Activated CD8-positive, alpha-beta T cell treated with anti-CD3 and anti-CD28 coated beads for 36 hours (primary cell): ENCODE measurements at regions of chr3 and their contacts with region 1.

Region 1: DNA sequence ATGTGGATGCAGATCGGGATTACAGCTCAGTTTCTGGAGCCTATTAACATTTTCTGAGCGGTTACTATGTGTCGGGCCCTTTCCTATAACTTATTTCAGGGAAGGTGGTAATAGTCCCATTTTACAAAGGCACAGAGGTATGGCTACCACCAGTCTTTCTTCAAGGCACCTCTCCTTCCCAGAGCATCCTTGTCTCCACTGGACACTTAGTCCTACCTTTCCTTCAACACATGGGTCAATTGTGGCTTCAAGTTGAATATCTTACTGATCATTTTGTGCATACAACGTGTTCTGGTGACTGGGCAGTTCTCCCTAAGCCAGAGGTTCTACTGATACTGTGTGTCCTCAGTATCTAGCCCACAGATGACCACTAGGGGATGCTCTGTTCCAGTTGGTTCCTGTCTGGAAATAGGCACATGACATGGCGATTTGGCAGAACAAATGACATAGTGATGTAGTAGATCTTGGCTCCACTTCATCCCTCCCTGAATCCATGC is 60.7 kb upstream of the CMTM8 start:
- DNase-seq: peak; percentile 72
- ATAC-seq: peak; percentile 74
- H3K4me3 Mint-ChIP-seq: no peak overlapping the region
- H3K27ac Mint-ChIP-seq: no peak overlapping the region
- H3K4me1 Mint-ChIP-seq: peaks cover 7% of the 10 kb centered on the region
- H3K27me3 Mint-ChIP-seq: peaks cover 8% of the 10 kb centered on the region
- CTCF ChIP-seq: peak; percentile 56

Region 2: GRCh38 chr3:31968927-31969418 is 208.8 kb before region 1 on chr3:
- CTCF ChIA-PET with region 1: no interaction called
- POLR2A ChIA-PET with region 1: no interaction called
- intact Hi-C with region 1: no loop called
- DNase-seq: no peak
- ATAC-seq: no peak
- H3K4me3 Mint-ChIP-seq: no peak overlapping the region
- H3K27ac Mint-ChIP-seq: no peak overlapping the region
- H3K4me1 Mint-ChIP-seq: no peaks in the 10 kb centered on the region
- H3K27me3 Mint-ChIP-seq: peaks cover 2% of the 10 kb centered on the region
- CTCF ChIP-seq: no peak

Region 3: GRCh38 chr3:32200490-32200889 is 22.7 kb after region 1 on chr3:
- CTCF ChIA-PET with region 1: interaction called, 10 read pairs
- POLR2A ChIA-PET with region 1: no interaction called
- intact Hi-C with region 1: no loop called
- DNase-seq: no peak
- ATAC-seq: no peak
- H3K4me3 Mint-ChIP-seq: no peak overlapping the region
- H3K27ac Mint-ChIP-seq: no peak overlapping the region
- H3K4me1 Mint-ChIP-seq: no peaks in the 10 kb centered on the region
- H3K27me3 Mint-ChIP-seq: peaks cover 4% of the 10 kb centered on the region
- CTCF ChIP-seq: no peak

Region 4: DNA sequence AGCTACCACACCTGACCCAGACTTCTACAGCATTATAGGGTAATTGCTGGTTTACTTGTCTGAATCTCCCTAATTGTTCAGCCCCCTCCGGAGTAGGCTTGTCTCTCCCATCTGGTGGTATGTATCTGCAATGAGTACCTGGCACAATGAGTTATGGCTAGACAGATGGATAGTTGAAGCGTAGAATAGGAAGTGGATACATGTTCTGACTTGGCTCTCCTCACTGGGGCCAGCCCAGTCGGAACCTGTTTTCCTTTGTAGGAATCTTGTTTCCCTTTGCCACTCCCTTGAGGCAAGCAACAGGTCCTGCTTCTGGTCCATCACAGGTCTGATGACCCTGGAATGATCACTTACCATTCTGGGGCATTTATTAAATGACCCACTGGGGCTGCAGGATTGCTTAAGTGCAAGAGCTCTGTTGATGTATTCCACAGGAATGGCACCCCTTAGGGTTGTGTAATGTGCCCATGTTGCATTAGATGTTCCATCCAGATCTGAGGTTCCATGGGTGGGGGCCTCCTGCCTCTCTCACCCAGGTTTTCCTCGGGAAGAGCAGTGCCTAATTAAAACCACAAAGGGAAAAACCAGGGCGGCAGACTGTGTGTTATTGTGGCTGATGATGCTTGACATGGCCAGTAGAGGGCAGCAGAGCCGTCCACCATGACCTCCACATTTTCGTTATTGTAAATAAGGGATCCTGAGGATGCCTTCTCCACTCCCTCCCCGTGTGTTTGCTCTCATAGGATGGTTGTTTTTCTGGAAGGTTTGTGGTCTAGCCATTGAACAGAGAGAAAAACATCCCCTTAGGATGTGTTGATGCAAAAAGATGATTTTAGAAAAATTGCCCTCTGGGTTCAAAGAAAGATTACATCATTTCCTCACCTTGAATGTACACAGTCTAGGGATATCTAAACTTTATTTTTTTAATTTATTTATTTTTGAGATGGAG is 118.8 kb after region 1 on chr3:
- CTCF ChIA-PET with region 1: interaction called, 27 read pairs
- POLR2A ChIA-PET with region 1: no interaction called
- intact Hi-C with region 1: no loop called
- DNase-seq: peak; percentile 72
- ATAC-seq: peak; percentile 81
- H3K4me3 Mint-ChIP-seq: no peak overlapping the region
- H3K27ac Mint-ChIP-seq: peak overlapping the region; percentile 55
- H3K4me1 Mint-ChIP-seq: peaks cover 16% of the 10 kb centered on the region
- H3K27me3 Mint-ChIP-seq: no peaks in the 10 kb centered on the region
- CTCF ChIP-seq: peak; percentile 88

Region 5: GRCh38 chr3:32334675-32335074 is 156.9 kb after region 1 on chr3:
- CTCF ChIA-PET with region 1: interaction called, 14 read pairs
- POLR2A ChIA-PET with region 1: no interaction called
- intact Hi-C with region 1: no loop called
- DNase-seq: peak; percentile 61
- ATAC-seq: peak; percentile 81
- H3K4me3 Mint-ChIP-seq: no peak overlapping the region
- H3K27ac Mint-ChIP-seq: no peak overlapping the region
- H3K4me1 Mint-ChIP-seq: peaks cover 21% of the 10 kb centered on the region
- H3K27me3 Mint-ChIP-seq: no peaks in the 10 kb centered on the region
- CTCF ChIP-seq: peak; percentile 60

Region 6: GRCh38 chr3:32374788-32375595 is 197.2 kb after region 1 on chr3:
- CTCF ChIA-PET with region 1: interaction called, 13 read pairs
- POLR2A ChIA-PET with region 1: no interaction called
- intact Hi-C with region 1: no loop called
- DNase-seq: peak; percentile 83
- ATAC-seq: peak; percentile 68
- H3K4me3 Mint-ChIP-seq: no peak overlapping the region
- H3K27ac Mint-ChIP-seq: no peak overlapping the region
- H3K4me1 Mint-ChIP-seq: peaks cover 24% of the 10 kb centered on the region
- H3K27me3 Mint-ChIP-seq: no peaks in the 10 kb centered on the region
- CTCF ChIP-seq: peak; percentile 76

Region 7: GRCh38 chr3:32667122-32667521 is 489.4 kb after region 1 on chr3:
- CTCF ChIA-PET with region 1: interaction called, 3 read pairs
- POLR2A ChIA-PET with region 1: no interaction called
- intact Hi-C with region 1: loop called (anchors 10 kb)
- DNase-seq: no peak
- ATAC-seq: no peak
- H3K4me3 Mint-ChIP-seq: no peak overlapping the region
- H3K27ac Mint-ChIP-seq: no peak overlapping the region
- H3K4me1 Mint-ChIP-seq: no peaks in the 10 kb centered on the region
- H3K27me3 Mint-ChIP-seq: peaks cover 1% of the 10 kb centered on the region
- CTCF ChIP-seq: no peak